PC-9 (cell line): ENCODE measurements at regions of chr1 and their contacts with region 1.

Region 1: GRCh38 chr1:16621300-16621658 is 7.9 kb upstream of the NBPF1 start:
- DNase-seq: no peak
- H3K4me3 ChIP-seq: no peak overlapping the region
- H3K27ac ChIP-seq: no peak overlapping the region
- H3K4me1 ChIP-seq: no peaks in the 10 kb centered on the region
- H3K27me3 ChIP-seq: no peaks in the 10 kb centered on the region
- CTCF ChIP-seq: 0 out of 2 replicates have a peak, but pooled peaks have one; percentile 11

Region 2: DNA sequence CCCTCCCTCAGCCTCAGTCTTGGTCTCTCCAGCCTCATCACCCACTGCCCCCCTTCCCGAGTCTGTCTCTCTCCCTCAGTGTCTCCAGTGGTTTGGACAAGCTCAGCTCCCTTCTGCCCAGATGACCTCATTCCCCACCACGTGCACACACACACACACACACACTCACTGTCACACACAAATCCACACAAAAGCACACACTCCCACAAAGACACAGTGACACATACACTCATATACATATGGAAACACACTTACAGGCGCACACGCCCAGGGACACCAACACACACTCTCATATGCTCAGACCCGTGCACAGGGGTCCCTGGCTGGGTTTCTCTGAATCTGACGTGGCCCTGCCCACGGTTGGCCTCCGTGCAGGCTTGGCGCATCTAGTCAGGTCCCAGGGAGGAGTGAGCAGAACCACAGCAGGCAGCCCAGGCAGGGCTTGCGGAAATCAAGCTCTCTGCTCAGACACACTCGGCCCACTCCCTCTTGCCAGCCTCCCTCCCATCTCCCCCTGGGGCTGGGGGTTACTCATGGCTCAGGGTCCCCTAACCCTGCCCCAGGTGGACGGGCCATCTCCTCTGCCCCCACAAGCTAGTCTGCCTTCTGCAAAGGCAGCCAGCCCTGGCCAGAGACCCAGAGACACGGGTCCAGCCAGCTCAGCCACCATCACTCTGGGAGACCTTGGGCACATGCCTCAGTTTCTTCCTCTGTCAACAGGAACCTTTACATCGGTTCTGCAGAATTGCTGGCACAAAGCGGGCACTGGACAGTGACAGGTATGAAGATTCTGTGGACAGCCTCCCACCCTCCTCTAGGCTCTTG is 509.3 kb before region 1 on chr1:
- CTCF ChIA-PET with region 1: no interaction called
- POLR2A ChIA-PET with region 1: no interaction called
- intact Hi-C with region 1: no loop called
- DNase-seq: no peak
- H3K4me3 ChIP-seq: no peak overlapping the region
- H3K27ac ChIP-seq: no peak overlapping the region
- H3K4me1 ChIP-seq: peaks cover 21% of the 10 kb centered on the region
- H3K27me3 ChIP-seq: no peaks in the 10 kb centered on the region
- CTCF ChIP-seq: no peak

Region 3: DNA sequence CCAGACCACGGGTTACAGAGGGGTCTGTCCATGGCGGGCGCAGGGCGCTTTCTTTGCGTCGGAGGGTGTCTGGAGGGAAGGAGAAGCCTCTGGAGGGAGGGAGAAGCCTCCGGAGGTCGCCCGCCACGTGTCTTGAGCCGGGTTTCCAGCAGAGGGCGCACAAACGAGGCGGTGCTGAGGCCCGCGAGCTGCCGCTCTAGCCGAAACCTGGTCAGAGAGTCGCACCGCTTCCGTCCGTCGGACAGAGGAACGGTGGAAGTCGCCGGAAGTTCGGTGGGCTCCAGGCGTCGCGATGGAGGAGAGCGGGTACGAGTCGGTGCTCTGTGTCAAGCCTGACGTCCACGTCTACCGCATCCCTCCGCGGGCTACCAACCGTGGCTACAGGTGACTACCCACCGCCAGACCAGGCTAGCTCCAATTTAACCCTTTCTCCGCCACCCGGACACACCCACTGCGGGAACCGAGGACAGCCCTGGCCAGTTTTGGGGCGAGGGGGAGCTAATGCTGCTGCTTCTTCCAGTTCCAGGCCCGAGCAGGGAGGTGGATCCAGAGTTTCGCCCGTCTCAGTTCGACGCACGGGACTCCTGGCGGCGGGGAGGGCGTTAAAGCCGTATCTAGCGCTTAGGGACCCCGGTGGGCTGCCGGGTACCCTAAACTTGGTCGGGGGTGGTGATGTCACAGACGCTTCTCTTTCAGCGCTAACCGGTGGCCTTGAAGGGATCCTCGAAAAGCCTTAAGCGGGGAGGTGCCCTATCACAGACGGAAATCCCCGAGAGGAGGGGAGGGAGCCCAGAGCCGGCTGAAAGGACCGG is 180.6 kb before region 1 on chr1 and contains the start of gene NECAP2:
- CTCF ChIA-PET with region 1: no interaction called
- POLR2A ChIA-PET with region 1: no interaction called
- intact Hi-C with region 1: loop called (anchors 2 kb)
- DNase-seq: peak; percentile 71 to 93
- H3K4me3 ChIP-seq: peak within 1 kb of the TSS; percentile 74
- H3K27ac ChIP-seq: peak within 1 kb of the TSS; percentile 14; the same call in 1 of the 2 replicates
- H3K4me1 ChIP-seq: peaks cover 5% of the 10 kb centered on the region; the same call in 1 of the 2 replicates
- H3K27me3 ChIP-seq: no peaks in the 10 kb centered on the region
- CTCF ChIP-seq: peak; percentile 71
- total RNA-seq, gene NECAP2: 49.6 and 52.4 TPM in 2 replicates

Region 4: GRCh38 chr1:16954579-16954978 is 333.3 kb after region 1 on chr1:
- CTCF ChIA-PET with region 1: interaction called, 3 read pairs
- POLR2A ChIA-PET with region 1: no interaction called
- intact Hi-C with region 1: loop called (anchors 5 kb)
- DNase-seq: no peak
- H3K4me3 ChIP-seq: no peak overlapping the region
- H3K27ac ChIP-seq: no peak overlapping the region
- H3K4me1 ChIP-seq: no peaks in the 10 kb centered on the region
- H3K27me3 ChIP-seq: no peaks in the 10 kb centered on the region
- CTCF ChIP-seq: no peak